Heart right ventricle (tissue), 16 donors: ENCODE measurements at regions of chr21 and their contacts with region 1.

Region 1: GRCh38 chr21:43345746-43346409 is 81.1 kb downstream of the SIK1 start:
- DNase-seq: no peak
- ATAC-seq: no peak
- H3K4me3 ChIP-seq: no peak overlapping the region
- H3K27ac ChIP-seq: peak overlapping the region in 1 of 10 donors; percentile 71
- H3K4me1 ChIP-seq: peaks cover 8 to 41% (median 16%) of the 10 kb centered on the region in 9 donors
- H3K27me3 ChIP-seq: no peaks in the 10 kb centered on the region
- CTCF ChIP-seq: no peak

Region 2: DNA sequence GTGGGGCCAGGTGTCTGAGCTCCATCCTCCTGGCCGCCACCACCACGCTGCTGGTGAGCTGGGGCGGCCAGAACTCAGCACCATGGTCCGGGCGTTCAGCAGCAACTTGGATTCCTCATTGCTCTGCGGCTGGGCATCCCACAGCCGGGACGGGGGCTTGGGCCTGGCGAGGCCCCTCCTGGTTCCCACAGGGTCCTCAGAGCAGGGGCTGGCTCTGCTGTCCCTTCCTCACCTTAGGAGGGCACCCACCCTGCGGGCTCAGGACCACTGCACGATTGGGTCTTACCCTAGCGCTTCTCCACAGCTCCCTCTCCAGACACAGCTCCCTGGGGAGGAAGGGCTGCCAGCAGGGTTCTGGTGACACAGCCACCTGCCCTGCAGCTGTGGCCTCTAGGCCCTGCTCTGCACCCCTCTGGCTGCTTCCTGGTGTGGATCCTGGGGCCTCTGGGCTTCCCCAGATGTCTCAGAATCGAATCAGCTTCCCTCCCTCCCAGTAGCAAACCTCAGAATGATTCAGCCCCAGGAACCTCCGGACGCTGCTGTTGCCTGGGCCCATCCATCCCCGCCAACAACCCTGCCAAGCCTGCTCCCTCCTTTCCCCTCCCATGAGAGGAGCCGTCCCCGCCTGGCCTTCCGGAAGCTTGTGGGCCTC is 152.1 kb before region 1 on chr21:
- intact Hi-C with region 1: no loop called
- DNase-seq: peak; percentile 57 to 62
- ATAC-seq: peak; percentile 31 to 73 (median 70)
- H3K4me3 ChIP-seq: no peak overlapping the region
- H3K27ac ChIP-seq: peak overlapping the region in 7 of 10 donors; percentile 4 to 68 (median 55)
- H3K4me1 ChIP-seq: peaks cover 8 to 44% (median 37%) of the 10 kb centered on the region in 9 donors
- H3K27me3 ChIP-seq: peaks cover 0 to 14% (median 0%) of the 10 kb centered on the region in 7 donors
- CTCF ChIP-seq: no peak

Region 3: GRCh38 chr21:43287111-43287759 is 58.6 kb before region 1 on chr21:
- intact Hi-C with region 1: loop called in 1 of 10 experiments (anchors 5 kb)
- DNase-seq: no peak
- ATAC-seq: no peak
- H3K4me3 ChIP-seq: no peak overlapping the region
- H3K27ac ChIP-seq: no peak overlapping the region
- H3K4me1 ChIP-seq: peaks cover 0 to 5% (median 0%) of the 10 kb centered on the region in 9 donors
- H3K27me3 ChIP-seq: peaks cover 0 to 7% (median 0%) of the 10 kb centered on the region in 7 donors
- CTCF ChIP-seq: no peak

Region 4: GRCh38 chr21:43295066-43295958 is 50.6 kb before region 1 on chr21:
- intact Hi-C with region 1: loop called in 2 of 10 experiments (anchors 5 kb)
- DNase-seq: no peak
- ATAC-seq: no peak
- H3K4me3 ChIP-seq: no peak overlapping the region
- H3K27ac ChIP-seq: no peak overlapping the region
- H3K4me1 ChIP-seq: peaks cover 0 to 14% (median 0%) of the 10 kb centered on the region in 9 donors
- H3K27me3 ChIP-seq: peaks cover 0 to 7% (median 0%) of the 10 kb centered on the region in 7 donors
- CTCF ChIP-seq: no peak

Region 5: DNA sequence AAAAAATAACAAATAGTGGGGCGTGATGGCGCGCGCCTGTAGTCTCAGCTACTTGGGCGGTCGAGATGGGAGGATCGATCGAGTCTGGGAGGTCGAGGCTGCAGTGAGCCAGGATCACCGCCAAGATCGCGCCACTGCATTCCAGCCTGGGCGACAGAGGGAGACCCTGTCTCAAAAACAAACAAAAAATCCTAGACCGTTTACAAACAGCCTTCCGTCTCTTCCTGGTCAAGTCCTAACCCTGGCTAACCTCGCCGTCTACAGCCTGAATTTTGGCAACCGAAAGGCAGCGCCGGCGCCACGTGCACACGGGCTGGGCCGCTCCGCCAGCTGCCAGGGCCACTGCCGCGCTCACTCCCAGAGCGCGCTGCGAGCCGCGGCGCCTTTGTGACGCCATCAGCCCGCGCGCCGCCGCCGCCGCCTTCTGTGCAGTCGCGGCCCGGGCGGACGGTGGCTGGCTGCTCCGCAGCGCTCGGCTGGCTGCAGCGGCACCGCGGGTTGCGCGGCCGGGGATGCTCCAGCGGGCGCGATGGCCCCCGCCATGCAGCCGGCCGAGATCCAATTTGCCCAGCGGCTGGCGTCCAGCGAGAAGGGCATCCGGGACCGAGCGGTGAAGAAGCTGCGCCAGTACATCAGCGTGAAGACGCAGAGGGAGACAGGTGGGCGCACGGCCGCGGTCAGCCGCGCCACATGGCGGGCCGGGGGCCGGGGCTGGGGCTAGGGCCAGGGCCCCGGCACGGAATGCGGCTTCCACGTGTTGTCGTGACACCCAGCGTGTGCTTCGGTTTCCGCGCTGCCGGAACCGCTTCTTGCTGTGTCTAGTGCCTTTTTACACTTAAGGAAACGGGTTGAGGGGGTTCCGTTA is 313.5 kb after region 1 on chr21 and contains the starts of genes HSF2BP and RRP1B:
- intact Hi-C with region 1: loop called in 1 of 10 experiments (anchors 10 kb)
- DNase-seq: peak; percentile 76 to 85
- ATAC-seq: peak; percentile 92 to 97 (median 94)
- H3K4me3 ChIP-seq: peak within 1 kb of the TSS; percentile 89 to 100 (median 98)
- H3K27ac ChIP-seq: peak within 1 kb of the TSS; percentile 37 to 96 (median 91)
- H3K4me1 ChIP-seq: peaks cover 0 to 45% (median 29%) of the 10 kb centered on the region in 9 donors
- H3K27me3 ChIP-seq: no peaks in the 10 kb centered on the region
- CTCF ChIP-seq: peak in 1 of 9 donors; percentile 12
- total RNA-seq, gene HSF2BP: 0.12 to 0.51 (median 0.18) TPM in 5 of 10 donors, not detected in the others
- total RNA-seq, gene RRP1B: 7.1 to 11.3 (median 8.6) TPM